HEK293 (cell line): ENCODE measurements at regions of chr21 and their contacts with region 1.

Region 1: DNA sequence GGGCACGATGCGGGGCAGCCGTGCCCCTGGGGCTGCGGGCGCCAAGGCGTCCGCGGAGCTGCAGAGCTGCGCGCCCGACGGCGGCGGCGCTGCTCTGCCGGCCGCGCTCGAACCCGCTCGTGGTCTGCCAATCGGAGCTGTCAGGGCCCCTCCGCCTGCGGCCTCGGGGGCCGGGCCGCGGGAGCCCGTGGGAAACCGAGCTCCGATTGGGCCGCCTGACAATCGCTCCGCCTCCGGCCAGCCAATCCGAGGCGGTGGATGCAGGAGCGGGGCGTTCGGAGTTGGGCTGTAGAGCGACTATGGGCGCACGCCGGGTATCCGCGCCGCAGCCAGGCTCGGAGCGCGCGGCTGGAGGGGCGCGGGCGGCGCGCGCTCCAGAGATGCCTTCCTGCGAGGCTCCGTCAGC is 100.5 kb upstream of the SOD1 start:
- H3K4me3 ChIP-seq: peak overlapping the region; percentile 75
- H3K27ac ChIP-seq: peak overlapping the region; percentile 91
- H3K4me1 ChIP-seq: peaks cover 38% of the 10 kb centered on the region
- CTCF ChIP-seq: no peak

Region 2: GRCh38 chr21:31343680-31344480 is 215.1 kb before region 1 on chr21 and contains the start of gene TIAM1:
- CTCF ChIA-PET with region 1: interaction called, 3 read pairs
- POLR2A ChIA-PET with region 1: interaction called, 14 read pairs
- H3K4me3 ChIP-seq: peak within 1 kb of the TSS; percentile 63
- H3K27ac ChIP-seq: peak within 1 kb of the TSS; percentile 7; the same call in 1 of the 2 replicates
- H3K4me1 ChIP-seq: peaks cover 13% of the 10 kb centered on the region; the same call in 1 of the 2 replicates
- CTCF ChIP-seq: no peak

Region 3: DNA sequence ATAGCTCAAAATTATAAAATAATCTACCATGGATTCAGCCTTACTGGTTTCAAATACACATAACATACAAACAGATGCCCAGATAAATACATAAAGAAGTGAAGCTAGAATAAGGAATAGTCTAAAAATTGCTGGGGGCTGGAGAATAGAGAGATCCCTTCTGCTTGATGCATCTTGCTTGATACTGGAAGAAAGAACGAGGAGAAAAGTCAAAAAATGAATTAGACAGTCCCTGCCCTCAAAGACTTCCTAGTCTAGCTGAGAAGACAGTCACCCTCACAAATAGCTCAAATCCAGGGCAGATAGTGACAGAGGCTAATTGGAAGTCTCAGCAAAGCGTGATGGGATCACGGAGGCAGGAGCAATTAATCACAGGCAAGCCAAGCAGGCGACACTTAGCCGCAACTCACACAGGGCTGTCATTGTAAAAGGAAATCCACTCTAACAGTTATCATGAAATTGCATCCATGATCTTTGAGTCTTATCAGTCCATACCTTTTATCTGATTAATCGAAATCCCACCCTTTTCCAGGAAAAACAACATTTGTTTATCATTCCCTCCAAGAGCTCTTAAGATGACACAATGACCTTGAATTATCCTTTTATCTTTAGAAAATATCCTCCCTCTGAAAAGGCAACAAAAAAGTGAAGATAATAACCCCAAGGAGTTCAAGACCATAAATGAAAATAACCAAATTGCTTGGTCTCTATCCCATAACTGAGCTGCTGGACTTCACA is 155.2 kb before region 1 on chr21:
- CTCF ChIA-PET with region 1: no interaction called
- POLR2A ChIA-PET with region 1: interaction called, 14 read pairs
- H3K4me3 ChIP-seq: no peak overlapping the region
- H3K27ac ChIP-seq: peak overlapping the region; percentile 2; the same call in 1 of the 2 replicates
- H3K4me1 ChIP-seq: peaks cover 27% of the 10 kb centered on the region
- CTCF ChIP-seq: no peak

Region 4: GRCh38 chr21:31537872-31538576 is 20.9 kb before region 1 on chr21:
- CTCF ChIA-PET with region 1: interaction called, 5 read pairs
- POLR2A ChIA-PET with region 1: interaction called, 11 read pairs
- H3K4me3 ChIP-seq: no peak overlapping the region
- H3K27ac ChIP-seq: no peak overlapping the region
- H3K4me1 ChIP-seq: peaks cover 3% of the 10 kb centered on the region
- CTCF ChIP-seq: no peak

Region 5: GRCh38 chr21:31543191-31543590 is 15.8 kb before region 1 on chr21:
- CTCF ChIA-PET with region 1: interaction called, 25 read pairs
- POLR2A ChIA-PET with region 1: interaction called, 28 read pairs
- H3K4me3 ChIP-seq: no peak overlapping the region
- H3K27ac ChIP-seq: peak overlapping the region; percentile 7; the same call in 1 of the 2 replicates
- H3K4me1 ChIP-seq: peaks cover 19% of the 10 kb centered on the region
- CTCF ChIP-seq: no peak

Region 6: DNA sequence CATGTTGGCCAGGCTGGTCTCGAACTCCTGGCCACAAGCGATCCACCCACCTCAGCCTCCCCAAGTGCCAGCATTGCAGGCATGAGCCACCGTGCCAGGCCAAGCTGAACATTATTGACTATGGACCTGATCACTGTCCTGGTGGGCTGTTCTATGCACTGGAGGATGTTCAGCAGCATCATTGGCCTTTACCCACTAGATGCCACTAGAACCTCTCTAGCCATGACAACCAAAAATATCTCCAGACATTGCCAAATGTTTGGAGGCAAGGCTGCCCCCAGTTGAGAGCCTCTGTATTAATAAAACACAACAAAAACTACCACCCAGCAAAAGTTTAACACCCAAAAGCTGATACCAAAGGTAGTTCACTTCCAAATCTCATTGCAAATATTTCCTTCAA is 10.3 kb before region 1 on chr21:
- CTCF ChIA-PET with region 1: interaction called, 25 read pairs
- POLR2A ChIA-PET with region 1: interaction called, 28 read pairs
- H3K4me3 ChIP-seq: no peak overlapping the region
- H3K27ac ChIP-seq: no peak overlapping the region
- H3K4me1 ChIP-seq: peaks cover 16% of the 10 kb centered on the region
- CTCF ChIP-seq: peak; percentile 80